Activated CD4-positive, alpha-beta T cell treated with anti-CD3 and anti-CD28 coated beads for 36 hours (primary cell): ENCODE measurements at regions of chr19 and their contacts with region 1.

Region 1: DNA sequence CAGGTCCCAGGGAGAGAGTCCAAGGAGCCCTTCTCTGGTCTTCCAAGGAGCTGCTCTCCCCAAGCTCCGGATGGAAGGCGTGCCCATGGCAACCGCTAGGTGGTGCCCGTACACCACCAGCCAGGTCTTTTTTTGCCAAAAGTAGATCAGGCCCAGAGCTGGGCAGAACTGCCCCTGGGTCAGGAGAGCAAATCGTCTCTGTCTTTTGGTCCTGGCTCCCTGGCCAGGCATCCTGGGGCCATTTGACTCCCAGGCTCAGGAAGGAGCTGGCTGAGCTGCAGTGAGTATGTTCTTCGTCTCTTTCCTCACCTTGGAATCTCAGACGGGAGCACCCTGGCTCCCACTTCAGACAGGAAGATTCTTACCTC is 24.6 kb upstream of the BCL3 start:
- DNase-seq: peak; percentile 88
- ATAC-seq: peak; percentile 89
- H3K4me3 Mint-ChIP-seq: no peak overlapping the region
- H3K27ac Mint-ChIP-seq: peak overlapping the region; percentile 51
- H3K4me1 Mint-ChIP-seq: peaks cover 33% of the 10 kb centered on the region
- H3K27me3 Mint-ChIP-seq: peaks cover 4% of the 10 kb centered on the region

Region 2: DNA sequence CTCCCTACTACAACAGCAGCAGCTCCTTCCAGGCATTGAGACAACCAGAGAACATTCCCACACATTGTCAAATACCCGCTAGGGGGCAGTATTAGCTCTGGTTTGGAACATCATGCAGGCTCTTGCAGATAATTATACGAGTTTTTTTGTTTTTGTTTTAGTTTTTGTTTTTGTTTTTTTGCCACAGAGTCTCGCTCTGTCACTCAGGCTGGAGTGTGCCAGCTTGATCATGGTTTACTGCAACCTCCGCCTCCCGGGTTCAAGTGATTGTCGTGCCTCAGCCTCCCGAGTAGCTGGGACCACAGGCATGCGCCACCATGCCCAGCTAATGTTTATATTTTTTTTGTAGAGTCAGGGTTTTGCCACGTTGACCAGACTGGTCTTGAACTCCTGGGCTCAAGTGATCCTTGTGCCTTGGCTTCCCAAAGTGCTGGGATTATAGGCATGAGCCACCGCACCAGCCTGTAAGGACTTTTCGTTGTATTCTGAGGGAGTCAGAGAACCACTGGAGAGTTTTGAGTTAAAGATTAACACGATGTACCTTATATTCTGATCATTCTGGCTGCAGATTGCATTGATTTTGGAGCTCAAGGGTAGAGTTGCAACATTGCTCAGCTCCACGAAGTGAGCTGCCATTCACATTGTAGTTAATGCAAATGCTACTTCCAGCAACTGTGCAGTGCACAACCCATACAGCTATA is 152.8 kb before region 1 on chr19:
- CTCF ChIA-PET with region 1: interaction called, 4 read pairs
- POLR2A ChIA-PET with region 1: no interaction called
- intact Hi-C with region 1: loop called in 1 of 2 experiments (anchors 1 kb)
- DNase-seq: peak; percentile 72
- ATAC-seq: peak; percentile 68
- H3K4me3 Mint-ChIP-seq: no peak overlapping the region
- H3K27ac Mint-ChIP-seq: no peak overlapping the region
- H3K4me1 Mint-ChIP-seq: no peaks in the 10 kb centered on the region
- H3K27me3 Mint-ChIP-seq: peaks cover 5% of the 10 kb centered on the region

Region 3: GRCh38 chr19:44653977-44654774 is 69.8 kb before region 1 on chr19:
- CTCF ChIA-PET with region 1: interaction called, 7 read pairs
- POLR2A ChIA-PET with region 1: no interaction called
- intact Hi-C with region 1: loop called in 1 of 2 experiments (anchors 1 kb)
- DNase-seq: peak; percentile 89
- ATAC-seq: peak; percentile 97
- H3K4me3 Mint-ChIP-seq: no peak overlapping the region
- H3K27ac Mint-ChIP-seq: no peak overlapping the region
- H3K4me1 Mint-ChIP-seq: peaks cover 11% of the 10 kb centered on the region
- H3K27me3 Mint-ChIP-seq: no peaks in the 10 kb centered on the region

Region 4: GRCh38 chr19:44712864-44713515 is 10.9 kb before region 1 on chr19:
- CTCF ChIA-PET with region 1: interaction called, 22 read pairs
- POLR2A ChIA-PET with region 1: no interaction called
- intact Hi-C with region 1: no loop called
- DNase-seq: no peak
- ATAC-seq: peak; percentile 23
- H3K4me3 Mint-ChIP-seq: no peak overlapping the region
- H3K27ac Mint-ChIP-seq: no peak overlapping the region
- H3K4me1 Mint-ChIP-seq: no peaks in the 10 kb centered on the region
- H3K27me3 Mint-ChIP-seq: no peaks in the 10 kb centered on the region

Region 5: DNA sequence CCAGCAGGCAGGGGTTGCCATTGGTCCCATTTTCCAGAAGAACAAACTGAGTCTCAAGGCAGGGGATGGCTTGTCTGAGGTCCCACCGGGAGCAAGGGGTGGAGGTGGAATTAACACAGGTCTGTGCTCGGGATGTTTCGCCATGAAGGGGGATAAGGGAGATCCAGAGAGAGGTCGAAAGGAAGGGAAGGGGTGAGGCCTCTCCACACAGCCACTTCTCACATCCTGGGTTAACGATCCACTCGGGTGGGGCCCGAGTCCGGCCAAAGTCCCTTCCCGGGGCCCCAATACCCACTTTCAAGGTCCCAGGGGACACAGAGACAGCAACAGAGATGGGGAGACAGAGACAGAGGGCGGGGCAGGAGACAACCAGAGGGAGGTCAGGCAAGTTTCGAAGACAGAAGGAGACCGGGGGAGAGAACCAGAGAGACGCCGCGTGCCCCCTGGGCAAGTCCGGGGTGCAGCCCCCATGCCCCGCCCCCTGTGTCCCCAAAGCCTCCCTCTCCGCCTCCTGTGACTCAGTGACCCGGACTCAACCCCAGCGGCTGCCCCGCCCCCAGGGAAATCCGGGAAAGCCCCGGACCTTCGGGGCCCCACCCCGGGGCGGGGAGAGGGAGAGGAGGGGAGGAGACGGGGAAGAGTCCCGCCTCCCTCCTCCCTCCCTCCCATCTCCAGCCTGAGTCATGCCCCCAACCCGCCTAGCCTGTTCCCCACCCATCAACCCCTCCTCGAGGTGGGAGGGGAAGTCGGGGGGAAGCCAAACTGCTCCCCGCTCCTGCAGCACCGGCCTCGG is 23.2 kb after region 1 on chr19:
- CTCF ChIA-PET with region 1: interaction called, 12 read pairs
- POLR2A ChIA-PET with region 1: interaction called, 6 read pairs
- intact Hi-C with region 1: loop called in 1 of 2 experiments (anchors 1 kb)
- DNase-seq: peak; percentile 98
- ATAC-seq: peak; percentile 85
- H3K4me3 Mint-ChIP-seq: peak overlapping the region; percentile 91
- H3K27ac Mint-ChIP-seq: peak overlapping the region; percentile 95
- H3K4me1 Mint-ChIP-seq: peaks cover 43% of the 10 kb centered on the region
- H3K27me3 Mint-ChIP-seq: no peaks in the 10 kb centered on the region

Region 6: GRCh38 chr19:44770550-44771257 is 46.8 kb after region 1 on chr19:
- CTCF ChIA-PET with region 1: interaction called, 288 read pairs
- POLR2A ChIA-PET with region 1: interaction called, 20 read pairs
- intact Hi-C with region 1: loop called (anchors 1 kb)
- DNase-seq: peak; percentile 99
- ATAC-seq: peak; percentile 100
- H3K4me3 Mint-ChIP-seq: peak overlapping the region; percentile 47
- H3K27ac Mint-ChIP-seq: peak overlapping the region; percentile 77
- H3K4me1 Mint-ChIP-seq: peaks cover 30% of the 10 kb centered on the region
- H3K27me3 Mint-ChIP-seq: no peaks in the 10 kb centered on the region

Region 7: DNA sequence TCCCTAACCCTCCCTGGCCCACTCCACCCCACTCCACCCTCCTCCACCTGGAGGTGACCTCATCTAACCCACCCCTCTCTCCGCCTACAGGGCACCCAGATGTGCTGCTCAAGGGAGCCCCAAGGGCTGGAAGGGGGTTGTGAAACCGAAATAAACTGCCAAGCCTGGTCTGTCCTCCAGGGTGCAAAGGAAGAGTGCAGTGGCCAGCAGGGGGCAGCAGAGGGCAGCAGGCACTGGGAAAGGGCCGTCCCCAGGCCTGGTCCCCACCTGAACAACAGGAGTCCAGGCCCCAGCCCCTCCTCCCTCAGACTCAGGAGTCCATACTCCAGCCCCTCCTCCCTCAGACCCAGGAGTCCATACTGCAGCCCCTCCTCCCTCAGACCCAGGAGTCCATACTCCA is 76.5 kb after region 1 on chr19:
- CTCF ChIA-PET with region 1: interaction called, 11 read pairs
- POLR2A ChIA-PET with region 1: no interaction called
- intact Hi-C with region 1: no loop called
- DNase-seq: peak; percentile 92
- ATAC-seq: peak; percentile 98
- H3K4me3 Mint-ChIP-seq: no peak overlapping the region
- H3K27ac Mint-ChIP-seq: no peak overlapping the region
- H3K4me1 Mint-ChIP-seq: peaks cover 11% of the 10 kb centered on the region
- H3K27me3 Mint-ChIP-seq: no peaks in the 10 kb centered on the region